Right ventricle myocardium superior (tissue), 1 donor: ENCODE measurements at regions of chr12 and their contacts with region 1.

Region 1: GRCh38 chr12:42589465-42590329 is at the start of gene PRICKLE1:
- DNase-seq: peak; percentile 61
- ATAC-seq: peak; percentile 90
- total RNA-seq, gene PRICKLE1: 14.4 TPM

Region 2: GRCh38 chr12:43282106-43282505 is 692.4 kb after region 1 on chr12:
- intact Hi-C with region 1: loop called (anchors 2 kb)
- DNase-seq: no peak
- ATAC-seq: no peak

Region 3: GRCh38 chr12:43338848-43339526 is 749.3 kb after region 1 on chr12:
- intact Hi-C with region 1: loop called (anchors 10 kb)
- DNase-seq: no peak
- ATAC-seq: peak; percentile 99